IMR-90 (cell line): ENCODE measurements at regions of chr11 and their contacts with region 1.

Region 1: DNA sequence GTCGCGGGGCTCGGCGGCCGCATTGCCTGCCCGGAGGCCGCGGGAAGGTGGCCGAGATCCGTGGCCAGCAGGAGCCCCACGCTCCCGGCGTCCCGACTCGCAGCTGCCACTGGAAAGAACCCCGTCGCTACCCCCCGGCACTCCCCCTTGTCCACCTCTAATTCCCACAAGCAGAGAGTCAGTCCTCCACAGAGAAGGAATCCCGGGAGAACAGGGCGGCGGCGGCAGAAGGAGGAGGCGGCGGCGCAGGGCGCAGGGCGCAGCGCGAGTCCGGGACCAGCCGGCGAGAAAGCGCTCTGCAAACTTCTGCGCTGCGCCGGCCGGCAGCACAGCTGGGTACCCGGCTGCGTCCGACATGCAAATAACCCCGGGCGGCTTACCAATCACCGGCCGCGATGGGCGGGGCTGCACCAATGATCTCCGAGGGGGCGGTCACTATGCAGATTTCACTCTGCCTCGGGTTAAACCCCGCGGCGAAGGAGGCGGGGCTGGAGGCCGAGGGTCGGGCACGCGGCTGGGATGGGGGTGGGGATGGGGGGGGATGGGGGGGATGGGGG is at the start of gene ABTB2:
- DNase-seq: peak; percentile 96
- ATAC-seq: peak; percentile 92
- H3K4me3 ChIP-seq: peak within 1 kb of the TSS; percentile 55
- H3K27ac ChIP-seq: no peak within 1 kb of the TSS; the same call in 1 of the 2 replicates
- H3K4me1 ChIP-seq: peaks cover 6% of the 10 kb centered on the region; the same call in 1 of the 2 replicates
- H3K27me3 ChIP-seq: peaks cover 22% of the 10 kb centered on the region
- CTCF ChIP-seq: no peak
- POLR2A ChIP-seq: peak; percentile 83
- RAD21 ChIP-seq: peak; percentile 18; the same call in 1 of the 2 replicates
- total RNA-seq, gene ABTB2: 0.18 and 0.28 TPM in 2 replicates

Region 2: GRCh38 chr11:33857933-33858371 is 499.8 kb before region 1 on chr11:
- CTCF ChIA-PET with region 1: no interaction called
- POLR2A ChIA-PET with region 1: no interaction called
- dilution Hi-C with region 1: no loop called
- in situ Hi-C with region 1: no loop called
- intact Hi-C with region 1: loop called (anchors 5 kb)
- DNase-seq: peak; percentile 54
- ATAC-seq: peak; percentile 87
- H3K4me3 ChIP-seq: no peak overlapping the region
- H3K27ac ChIP-seq: no peak overlapping the region
- H3K4me1 ChIP-seq: no peaks in the 10 kb centered on the region
- H3K27me3 ChIP-seq: peaks cover 60% of the 10 kb centered on the region
- CTCF ChIP-seq: peak; percentile 84
- POLR2A ChIP-seq: no peak
- RAD21 ChIP-seq: peak; percentile 81

Region 3: GRCh38 chr11:34051349-34052035 is 306.3 kb before region 1 on chr11 and contains the start of gene CAPRIN1:
- CTCF ChIA-PET with region 1: no interaction called
- POLR2A ChIA-PET with region 1: no interaction called
- dilution Hi-C with region 1: no loop called
- in situ Hi-C with region 1: no loop called
- intact Hi-C with region 1: loop called (anchors 2 kb)
- DNase-seq: peak; percentile 83
- ATAC-seq: peak; percentile 87
- H3K4me3 ChIP-seq: peak within 1 kb of the TSS; percentile 67
- H3K27ac ChIP-seq: peak within 1 kb of the TSS; percentile 99
- H3K4me1 ChIP-seq: peaks cover 4% of the 10 kb centered on the region; the same call in 1 of the 2 replicates
- H3K27me3 ChIP-seq: no peaks in the 10 kb centered on the region
- CTCF ChIP-seq: no peak
- POLR2A ChIP-seq: peak; percentile 70
- RAD21 ChIP-seq: no peak
- total RNA-seq, gene CAPRIN1: 253 and 266 TPM in 2 replicates

Region 4: DNA sequence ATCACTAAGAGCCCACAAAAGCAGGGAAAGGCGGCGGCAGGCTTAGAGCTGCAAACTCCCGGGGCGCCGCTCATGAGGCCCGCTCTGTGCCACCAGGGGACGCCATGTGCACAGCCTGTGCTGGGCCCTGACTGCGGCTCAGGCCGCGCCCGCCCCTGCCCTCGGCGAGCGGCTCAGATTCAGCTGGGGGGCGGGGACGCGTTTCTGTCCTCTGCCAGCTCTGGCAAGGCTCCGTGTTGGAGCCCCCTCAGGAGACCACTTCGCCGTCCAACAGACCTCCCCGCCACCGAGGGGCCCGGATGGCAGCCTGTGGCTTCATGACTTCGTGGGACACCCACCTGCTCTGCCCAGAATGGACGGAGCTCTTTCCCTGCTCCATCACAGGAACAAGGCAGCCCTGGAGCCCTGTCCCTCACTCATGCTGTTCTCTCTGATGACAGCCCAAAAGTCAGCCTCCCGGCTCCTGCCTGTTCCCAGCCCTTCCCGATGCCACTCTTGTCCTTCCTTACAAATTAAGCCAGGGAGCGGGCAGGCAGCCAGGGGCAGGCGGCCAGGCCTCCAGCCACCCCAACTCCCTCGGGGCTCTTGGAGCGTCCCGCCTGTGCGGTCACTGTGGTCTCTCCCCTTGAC is 183.3 kb before region 1 on chr11:
- CTCF ChIA-PET with region 1: interaction called, 37 read pairs
- POLR2A ChIA-PET with region 1: interaction called, 14 read pairs
- dilution Hi-C with region 1: no loop called
- in situ Hi-C with region 1: loop called (anchors 5 kb)
- intact Hi-C with region 1: loop called (anchors 1 kb)
- DNase-seq: peak; percentile 49
- ATAC-seq: peak; percentile 99
- H3K4me3 ChIP-seq: no peak overlapping the region
- H3K27ac ChIP-seq: no peak overlapping the region
- H3K4me1 ChIP-seq: peaks cover 6% of the 10 kb centered on the region; the same call in 1 of the 2 replicates
- H3K27me3 ChIP-seq: peaks cover 11% of the 10 kb centered on the region
- CTCF ChIP-seq: peak; percentile 98
- POLR2A ChIP-seq: 0 out of 2 replicates have a peak, but pooled peaks have one; percentile 55
- RAD21 ChIP-seq: peak; percentile 100

Region 5: DNA sequence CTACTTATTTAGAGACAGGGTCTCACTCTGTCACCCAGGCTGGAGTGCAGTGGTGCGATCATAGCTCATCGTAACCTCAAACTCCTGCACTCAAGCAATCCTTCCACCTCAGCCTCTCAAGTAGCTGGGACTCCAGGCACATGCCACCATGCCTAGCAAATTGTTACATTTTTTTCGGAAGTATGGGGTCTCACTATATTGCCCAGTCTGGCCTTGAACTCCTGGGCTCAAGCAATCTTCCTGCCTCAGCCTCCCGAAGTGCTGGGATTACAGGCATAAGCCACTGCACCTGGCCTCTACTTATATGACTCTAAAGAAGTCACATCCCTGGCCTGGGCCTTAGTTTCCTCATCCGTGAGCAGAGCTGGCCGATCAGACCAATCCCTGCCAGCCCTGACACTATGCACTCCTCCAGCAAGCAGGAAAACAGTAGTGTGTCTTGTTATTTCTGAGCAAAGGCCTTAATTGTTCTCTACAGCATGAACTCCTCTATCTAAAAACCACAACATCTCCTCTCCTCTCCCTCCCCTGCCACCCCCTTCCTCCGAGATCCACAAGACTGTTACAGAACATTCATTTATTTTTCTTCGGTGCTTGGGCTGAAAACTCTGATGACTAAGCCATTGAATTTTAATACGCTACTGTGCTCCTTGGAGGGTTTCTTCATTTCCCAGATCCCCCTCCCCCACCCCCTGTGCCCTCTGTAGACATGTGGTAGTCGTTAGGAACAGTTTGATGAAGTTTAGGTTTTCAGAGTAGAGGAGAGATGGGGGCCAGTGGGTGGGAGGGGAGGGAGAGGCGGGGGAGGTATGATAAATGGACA is 91.5 kb before region 1 on chr11:
- CTCF ChIA-PET with region 1: no interaction called
- POLR2A ChIA-PET with region 1: no interaction called
- dilution Hi-C with region 1: loop called (anchors 10 kb)
- in situ Hi-C with region 1: no loop called
- intact Hi-C with region 1: loop called (anchors 2 kb)
- DNase-seq: peak; percentile 95
- ATAC-seq: peak; percentile 90
- H3K4me3 ChIP-seq: no peak overlapping the region
- H3K27ac ChIP-seq: peak overlapping the region; percentile 19; the same call in 1 of the 2 replicates
- H3K4me1 ChIP-seq: peaks cover 11% of the 10 kb centered on the region; the same call in 1 of the 2 replicates
- H3K27me3 ChIP-seq: peaks cover 20% of the 10 kb centered on the region
- CTCF ChIP-seq: no peak
- POLR2A ChIP-seq: no peak
- RAD21 ChIP-seq: no peak

Region 6: DNA sequence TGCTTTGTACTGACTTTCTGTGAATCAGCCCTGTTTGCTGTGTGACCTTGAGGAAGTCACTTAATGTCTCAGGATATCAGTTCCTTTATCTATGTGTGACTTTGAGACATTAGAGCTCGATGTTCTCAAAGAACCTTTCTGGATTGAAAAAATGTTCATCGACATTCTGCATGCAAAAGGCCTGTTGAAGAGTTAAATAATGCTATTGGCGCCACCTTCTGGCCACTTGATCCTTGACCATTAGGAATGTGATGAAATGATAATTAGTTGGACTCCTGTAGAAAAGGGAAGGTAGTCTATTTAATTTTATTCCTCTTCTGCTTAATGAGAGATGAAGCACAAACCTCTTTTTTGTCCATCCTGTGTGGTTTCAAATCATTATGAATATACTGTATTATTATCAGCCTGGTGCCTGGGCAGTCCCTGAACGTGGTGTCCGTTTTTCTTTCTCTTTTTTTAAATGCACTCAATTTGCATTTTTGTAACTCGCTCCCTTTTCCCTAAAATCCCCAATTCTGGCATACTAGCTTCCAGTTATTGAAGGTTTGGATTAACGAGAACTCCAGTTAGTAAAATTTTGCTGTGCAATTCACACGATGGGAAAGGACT is 135.1 kb after region 1 on chr11:
- CTCF ChIA-PET with region 1: interaction called, 4 read pairs
- POLR2A ChIA-PET with region 1: no interaction called
- dilution Hi-C with region 1: no loop called
- in situ Hi-C with region 1: no loop called
- intact Hi-C with region 1: loop called (anchors 2 kb)
- DNase-seq: peak; percentile 51
- ATAC-seq: peak; percentile 75
- H3K4me3 ChIP-seq: no peak overlapping the region
- H3K27ac ChIP-seq: no peak overlapping the region
- H3K4me1 ChIP-seq: no peaks in the 10 kb centered on the region
- H3K27me3 ChIP-seq: peaks cover 46% of the 10 kb centered on the region
- CTCF ChIP-seq: peak; percentile 69
- POLR2A ChIP-seq: no peak
- RAD21 ChIP-seq: peak; percentile 52